Activated CD4-positive, alpha-beta memory T cell treated with anti-CD3 and anti-CD28 coated beads for 36 hours (primary cell): ENCODE measurements at regions of chr10 and their contacts with region 1.

Region 1: DNA sequence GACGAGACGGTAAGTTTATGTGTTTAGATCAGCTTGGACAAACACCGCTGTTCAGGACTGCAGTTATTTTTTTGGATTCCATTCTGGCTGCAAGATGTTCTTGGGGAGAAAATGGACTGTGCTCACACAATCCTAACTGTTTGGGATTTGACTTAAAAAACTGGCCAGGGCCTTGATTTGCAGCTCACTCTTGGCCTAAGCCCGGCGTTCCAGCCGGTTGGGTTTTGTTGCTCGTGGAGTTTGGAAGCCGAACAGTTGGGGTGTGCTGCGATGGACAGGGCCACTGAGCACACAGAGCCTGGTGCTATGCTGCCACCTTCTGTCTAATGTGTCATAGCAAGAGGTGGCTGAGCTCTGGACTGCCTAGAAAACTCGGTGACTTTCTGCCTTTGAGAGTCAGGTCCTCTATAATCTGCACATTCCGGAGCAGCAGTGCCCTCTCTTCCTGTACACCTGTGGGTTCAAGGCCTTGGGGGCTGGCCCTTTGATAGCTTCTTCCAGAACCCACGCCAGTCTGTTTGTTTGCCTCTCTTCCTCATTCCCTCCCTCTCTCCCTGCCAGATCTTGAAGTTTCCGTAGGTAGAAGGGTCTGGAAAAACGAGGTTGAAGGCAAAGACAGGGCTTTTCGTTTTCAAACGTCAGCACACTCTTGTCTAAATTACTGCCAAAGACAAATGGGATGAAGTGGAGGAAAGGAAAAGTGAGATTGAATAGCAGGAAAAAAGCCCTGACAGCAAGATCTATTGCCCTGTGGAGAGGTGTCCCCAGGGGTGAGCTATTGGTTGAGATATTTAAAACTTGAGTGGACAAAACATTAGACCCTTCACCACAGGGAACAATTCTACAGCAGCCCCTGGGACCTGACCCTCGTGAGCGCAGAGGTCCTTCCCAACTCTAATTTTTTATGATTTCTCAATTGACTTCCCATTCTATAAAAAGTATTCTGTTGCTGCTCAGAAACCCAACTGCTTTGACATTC is 167.5 kb upstream of the HABP2 start:
- DNase-seq: peak; percentile 62
- H3K4me3 Mint-ChIP-seq: no peak overlapping the region
- H3K27ac Mint-ChIP-seq: no peak overlapping the region
- H3K4me1 Mint-ChIP-seq: peaks cover 20% of the 10 kb centered on the region
- H3K27me3 Mint-ChIP-seq: peaks cover 3% of the 10 kb centered on the region

Region 2: DNA sequence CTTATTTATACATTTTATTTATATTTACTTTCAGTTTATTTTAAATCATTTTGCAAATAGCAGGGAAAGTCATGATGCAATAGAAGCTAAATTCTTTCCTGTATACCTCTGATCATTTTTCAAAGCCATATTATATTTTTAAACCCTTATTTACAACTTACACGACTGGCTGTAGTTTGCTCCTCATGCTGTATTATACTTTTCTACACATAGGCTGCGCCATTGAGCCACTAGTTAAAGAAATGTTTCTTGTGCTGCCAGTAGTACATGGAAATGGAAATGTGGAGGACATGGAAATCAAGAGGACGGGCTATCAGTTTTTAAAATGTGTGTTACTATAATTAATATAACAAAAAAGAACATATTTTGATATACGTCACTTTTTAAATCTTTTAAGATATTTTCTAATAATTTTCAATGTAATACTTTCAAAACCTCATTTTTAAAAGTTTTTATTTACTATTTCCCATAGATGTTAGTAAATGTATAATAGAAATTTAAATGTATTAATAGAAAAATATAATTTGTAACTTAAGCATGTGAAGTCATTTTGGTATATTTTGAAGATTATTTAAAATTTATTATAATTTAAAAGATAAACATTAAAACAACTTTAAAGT is 819.8 kb before region 1 on chr10:
- CTCF ChIA-PET with region 1: interaction called, 3 read pairs
- POLR2A ChIA-PET with region 1: no interaction called
- intact Hi-C with region 1: loop called (anchors 2 kb)
- DNase-seq: no peak
- H3K4me3 Mint-ChIP-seq: no peak overlapping the region
- H3K27ac Mint-ChIP-seq: no peak overlapping the region
- H3K4me1 Mint-ChIP-seq: no peaks in the 10 kb centered on the region
- H3K27me3 Mint-ChIP-seq: no peaks in the 10 kb centered on the region

Region 3: GRCh38 chr10:112721080-112721698 is 664.1 kb before region 1 on chr10:
- CTCF ChIA-PET with region 1: interaction called, 15 read pairs
- POLR2A ChIA-PET with region 1: no interaction called
- intact Hi-C with region 1: loop called (anchors 1 kb)
- DNase-seq: no peak
- H3K4me3 Mint-ChIP-seq: no peak overlapping the region
- H3K27ac Mint-ChIP-seq: no peak overlapping the region
- H3K4me1 Mint-ChIP-seq: no peaks in the 10 kb centered on the region
- H3K27me3 Mint-ChIP-seq: no peaks in the 10 kb centered on the region

Region 4: DNA sequence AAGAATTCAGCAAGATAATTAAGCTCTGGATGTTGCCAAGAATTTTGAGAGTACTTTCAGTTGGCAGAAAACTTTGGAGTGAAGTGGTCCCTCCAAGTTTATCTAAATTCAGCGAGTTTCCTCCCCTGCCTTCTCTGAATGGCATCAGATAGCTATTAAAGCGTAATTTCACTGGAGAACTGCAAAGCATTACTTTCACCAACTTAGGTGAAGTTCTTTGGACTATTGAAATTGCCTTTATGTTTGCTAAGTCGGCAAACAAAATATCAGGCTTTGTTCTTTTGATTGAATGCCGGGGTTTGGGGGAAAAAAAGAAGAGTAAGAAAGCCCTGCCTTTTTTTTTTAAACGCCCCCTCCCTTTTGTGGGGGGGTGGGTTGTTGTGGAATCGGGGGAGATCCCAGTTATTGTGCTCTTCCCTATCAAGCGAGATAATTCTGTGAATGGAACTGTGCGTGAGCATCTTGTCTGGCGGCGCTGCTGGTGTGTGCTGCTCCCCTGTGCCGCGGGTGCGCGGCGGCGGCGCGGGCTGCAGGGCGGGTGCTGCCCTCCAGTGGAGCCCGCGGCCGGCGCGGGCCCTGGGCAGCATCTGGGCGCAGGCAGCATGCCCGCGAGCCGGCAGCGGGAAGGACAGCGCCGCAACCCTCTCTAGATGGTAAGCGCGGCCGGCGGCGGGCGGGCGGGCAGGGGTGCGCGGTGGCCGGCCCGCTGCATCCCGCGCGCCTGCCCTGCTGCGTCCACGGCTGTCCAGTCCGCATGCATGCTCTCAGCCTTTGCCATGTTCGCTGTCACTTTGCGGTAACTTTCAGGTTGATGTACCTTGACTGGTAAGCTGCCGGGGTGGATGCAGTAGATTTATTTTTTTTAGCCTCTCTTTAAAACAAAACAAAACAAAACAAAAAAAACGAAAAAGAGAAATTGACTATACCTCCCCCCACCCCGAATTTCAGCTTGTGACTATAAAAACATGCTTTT is 258.8 kb before region 1 on chr10:
- CTCF ChIA-PET with region 1: interaction called, 4 read pairs
- POLR2A ChIA-PET with region 1: no interaction called
- intact Hi-C with region 1: loop called (anchors 10 kb)
- DNase-seq: peak; percentile 54
- H3K4me3 Mint-ChIP-seq: no peak overlapping the region
- H3K27ac Mint-ChIP-seq: no peak overlapping the region
- H3K4me1 Mint-ChIP-seq: peaks cover 3% of the 10 kb centered on the region
- H3K27me3 Mint-ChIP-seq: peaks cover 47% of the 10 kb centered on the region

Region 5: GRCh38 chr10:113221756-113222168 is 163.5 kb before region 1 on chr10:
- CTCF ChIA-PET with region 1: no interaction called
- POLR2A ChIA-PET with region 1: no interaction called
- intact Hi-C with region 1: loop called (anchors 10 kb)
- DNase-seq: no peak
- H3K4me3 Mint-ChIP-seq: no peak overlapping the region
- H3K27ac Mint-ChIP-seq: no peak overlapping the region
- H3K4me1 Mint-ChIP-seq: peaks cover 18% of the 10 kb centered on the region
- H3K27me3 Mint-ChIP-seq: peaks cover 47% of the 10 kb centered on the region

Region 6: GRCh38 chr10:113300617-113301016 is 84.7 kb before region 1 on chr10:
- CTCF ChIA-PET with region 1: no interaction called
- POLR2A ChIA-PET with region 1: no interaction called
- intact Hi-C with region 1: no loop called
- DNase-seq: no peak
- H3K4me3 Mint-ChIP-seq: no peak overlapping the region
- H3K27ac Mint-ChIP-seq: no peak overlapping the region
- H3K4me1 Mint-ChIP-seq: no peaks in the 10 kb centered on the region
- H3K27me3 Mint-ChIP-seq: peaks cover 18% of the 10 kb centered on the region

Region 7: GRCh38 chr10:113369365-113369694 is 16.0 kb before region 1 on chr10:
- CTCF ChIA-PET with region 1: no interaction called
- POLR2A ChIA-PET with region 1: no interaction called
- intact Hi-C with region 1: no loop called
- DNase-seq: no peak
- H3K4me3 Mint-ChIP-seq: no peak overlapping the region
- H3K27ac Mint-ChIP-seq: no peak overlapping the region
- H3K4me1 Mint-ChIP-seq: no peaks in the 10 kb centered on the region
- H3K27me3 Mint-ChIP-seq: peaks cover 7% of the 10 kb centered on the region